ENCODE measurements at regions of chr21 and their contacts with region 1.

Region 1: GRCh38 chr21:33924079-33924765 is 8.6 kb upstream of the ATP5PO start:
- DNase-seq: peak; percentile 96
- ATAC-seq: peak; percentile 94
- H3K4me3 Mint-ChIP-seq: no peak overlapping the region
- H3K27ac Mint-ChIP-seq: peak overlapping the region; percentile 51
- H3K4me1 Mint-ChIP-seq: peaks cover 12% of the 10 kb centered on the region
- H3K27me3 Mint-ChIP-seq: no peaks in the 10 kb centered on the region

Region 2: DNA sequence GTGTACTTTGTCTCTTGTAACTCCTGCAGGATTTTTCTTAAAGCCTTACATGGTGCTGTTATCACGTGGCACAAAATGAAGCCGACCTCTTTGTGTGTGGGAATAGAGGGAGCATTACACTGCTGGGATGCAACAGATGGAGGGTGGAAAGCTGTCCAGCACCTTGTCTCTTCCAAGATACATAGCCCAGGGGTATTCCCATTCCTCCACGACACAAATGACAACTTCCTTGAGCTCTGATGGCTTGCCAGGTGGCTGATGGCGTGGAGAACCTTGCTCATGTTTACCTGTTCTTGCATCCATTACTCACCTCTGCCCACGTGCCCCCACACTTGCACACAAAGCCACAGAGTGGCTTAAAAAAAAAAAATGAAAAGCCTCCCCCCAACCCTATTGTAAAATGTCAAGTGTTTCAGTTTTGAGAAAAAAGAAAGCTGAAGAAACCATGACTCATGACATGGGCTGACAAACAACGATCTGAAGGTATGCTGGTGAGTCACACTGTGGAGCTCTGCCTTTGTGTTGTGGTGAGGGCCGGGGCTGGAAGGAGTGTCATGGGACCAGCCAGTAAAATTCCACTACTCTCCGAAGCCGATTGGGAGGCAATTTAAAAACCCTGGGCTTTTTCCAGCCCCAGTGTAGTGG is 23.4 kb after region 1 on chr21:
- CTCF ChIA-PET with region 1: interaction called, 23 read pairs
- POLR2A ChIA-PET with region 1: interaction called, 17 read pairs
- intact Hi-C with region 1: no loop called
- DNase-seq: peak; percentile 92
- ATAC-seq: peak; percentile 63
- H3K4me3 Mint-ChIP-seq: peak overlapping the region; percentile 70
- H3K27ac Mint-ChIP-seq: peak overlapping the region; percentile 100
- H3K4me1 Mint-ChIP-seq: peaks cover 79% of the 10 kb centered on the region
- H3K27me3 Mint-ChIP-seq: no peaks in the 10 kb centered on the region

Region 3: GRCh38 chr21:34020005-34020847 is 96.0 kb after region 1 on chr21:
- CTCF ChIA-PET with region 1: interaction called, 13 read pairs
- POLR2A ChIA-PET with region 1: interaction called, 6 read pairs
- intact Hi-C with region 1: no loop called
- DNase-seq: no peak
- ATAC-seq: peak; percentile 30
- H3K4me3 Mint-ChIP-seq: no peak overlapping the region
- H3K27ac Mint-ChIP-seq: no peak overlapping the region
- H3K4me1 Mint-ChIP-seq: peaks cover 11% of the 10 kb centered on the region
- H3K27me3 Mint-ChIP-seq: no peaks in the 10 kb centered on the region

Region 4: DNA sequence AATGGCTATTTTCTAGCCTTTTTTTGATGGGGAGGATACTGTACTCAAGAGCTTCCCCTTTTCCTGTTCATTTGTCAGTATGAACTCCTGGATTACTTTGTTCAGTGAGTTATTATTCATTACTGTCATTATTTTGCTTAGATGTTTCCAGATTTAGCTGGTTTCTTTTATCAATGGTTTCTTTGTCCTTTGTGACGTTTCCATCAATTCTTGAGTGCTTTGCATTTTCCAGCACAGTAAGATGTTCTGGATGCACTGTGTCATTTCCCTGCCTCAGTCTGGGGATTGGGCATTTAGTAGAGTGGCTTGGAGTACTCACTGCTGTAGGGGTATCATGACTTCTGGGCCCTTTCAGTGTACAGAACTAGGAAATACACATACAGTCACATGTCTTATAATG is 183.4 kb after region 1 on chr21:
- CTCF ChIA-PET with region 1: interaction called, 16 read pairs
- POLR2A ChIA-PET with region 1: no interaction called
- intact Hi-C with region 1: no loop called
- DNase-seq: no peak
- ATAC-seq: no peak
- H3K4me3 Mint-ChIP-seq: no peak overlapping the region
- H3K27ac Mint-ChIP-seq: peak overlapping the region; percentile 25
- H3K4me1 Mint-ChIP-seq: peaks cover 94% of the 10 kb centered on the region
- H3K27me3 Mint-ChIP-seq: no peaks in the 10 kb centered on the region

Region 5: DNA sequence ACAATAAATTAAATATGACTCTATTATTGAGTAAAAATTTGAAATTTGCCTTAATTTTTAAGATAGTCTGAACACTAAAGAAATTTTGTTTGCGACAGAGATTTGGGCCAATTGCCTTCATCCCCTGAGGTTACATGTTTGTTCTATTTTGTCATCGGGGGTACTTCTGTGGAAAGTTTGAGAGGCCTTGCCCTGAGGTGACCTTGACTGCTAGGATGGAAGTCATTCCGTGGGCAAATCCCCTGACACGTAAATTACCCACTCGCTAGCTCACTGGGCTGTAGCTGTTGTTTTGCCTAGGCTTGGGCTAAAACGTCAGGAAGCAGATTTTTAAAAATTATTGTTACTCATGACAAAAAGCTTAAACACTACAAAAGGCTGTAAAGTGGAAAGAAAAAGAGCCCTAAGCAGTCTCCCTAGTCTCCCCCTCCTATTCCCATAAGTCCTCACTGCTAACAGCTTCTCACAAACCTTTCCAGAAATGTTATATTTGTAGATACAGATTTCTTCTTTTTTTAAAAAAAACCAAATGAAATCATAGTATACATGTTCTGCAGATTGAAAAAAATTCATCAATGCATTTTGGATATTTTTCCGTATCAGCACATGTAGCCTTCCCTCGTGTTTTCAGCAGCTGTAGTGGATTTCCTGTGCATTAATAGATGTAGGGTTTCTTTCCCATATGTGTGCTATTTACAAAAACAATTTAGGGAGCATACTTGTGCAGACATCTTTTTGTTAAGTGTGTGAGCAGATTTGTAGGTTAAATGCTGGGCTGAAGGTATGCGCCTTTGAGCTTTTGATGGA is 291.9 kb after region 1 on chr21:
- CTCF ChIA-PET with region 1: interaction called, 10 read pairs
- POLR2A ChIA-PET with region 1: no interaction called
- intact Hi-C with region 1: no loop called
- DNase-seq: no peak
- ATAC-seq: no peak
- H3K4me3 Mint-ChIP-seq: no peak overlapping the region
- H3K27ac Mint-ChIP-seq: no peak overlapping the region
- H3K4me1 Mint-ChIP-seq: no peaks in the 10 kb centered on the region
- H3K27me3 Mint-ChIP-seq: no peaks in the 10 kb centered on the region

Region 6: GRCh38 chr21:34351786-34352241 is 427.6 kb after region 1 on chr21:
- CTCF ChIA-PET with region 1: interaction called, 103 read pairs
- POLR2A ChIA-PET with region 1: interaction called, 7 read pairs
- intact Hi-C with region 1: loop called (anchors 1 kb)
- DNase-seq: peak; percentile 54
- ATAC-seq: peak; percentile 71
- H3K4me3 Mint-ChIP-seq: no peak overlapping the region
- H3K27ac Mint-ChIP-seq: no peak overlapping the region
- H3K4me1 Mint-ChIP-seq: peaks cover 4% of the 10 kb centered on the region
- H3K27me3 Mint-ChIP-seq: peaks cover 10% of the 10 kb centered on the region

Region 7: DNA sequence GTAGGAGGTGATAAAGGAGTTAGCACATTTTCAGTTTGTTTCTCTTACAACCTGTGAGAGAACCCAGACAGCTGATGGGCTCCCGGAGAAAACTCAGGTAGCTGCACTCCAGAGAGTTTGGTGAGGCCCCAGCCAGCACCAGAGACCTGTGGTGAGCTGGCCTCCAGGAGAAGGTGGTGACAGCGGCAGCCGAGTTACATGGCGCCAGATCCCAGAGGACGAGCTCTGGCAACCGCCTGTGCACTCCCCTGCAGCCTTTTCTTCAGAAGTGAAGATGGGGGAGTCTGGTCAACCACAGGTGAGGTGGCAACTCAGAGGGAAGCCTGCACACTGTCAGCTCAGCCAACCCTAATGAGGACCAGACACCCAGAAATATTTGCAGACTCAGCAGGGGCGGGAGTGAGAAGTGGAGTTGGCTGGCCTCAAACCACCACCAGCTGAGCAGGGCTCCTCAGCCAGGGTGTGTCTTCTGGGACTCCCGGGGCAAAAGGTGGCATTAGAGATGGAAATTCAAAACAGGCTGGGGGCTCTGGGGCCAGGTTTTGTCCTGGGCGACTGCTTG is 1926.4 kb after region 1 on chr21:
- CTCF ChIA-PET with region 1: no interaction called
- POLR2A ChIA-PET with region 1: no interaction called
- intact Hi-C with region 1: no loop called
- DNase-seq: no peak
- ATAC-seq: no peak
- H3K4me3 Mint-ChIP-seq: no peak overlapping the region
- H3K27ac Mint-ChIP-seq: no peak overlapping the region
- H3K4me1 Mint-ChIP-seq: no peaks in the 10 kb centered on the region
- H3K27me3 Mint-ChIP-seq: peaks cover 2% of the 10 kb centered on the region

Measured in activated CD4-positive, alpha-beta T cell treated with anti-CD3 and anti-CD28 coated beads for 36 hours (primary cell).